GM12878 (cell line): ENCODE measurements at regions of chr9 and their contacts with region 1.

Region 1: GRCh38 chr9:107282753-107283625 is at the start of gene RAD23B:
- DNase-seq: peak; percentile 88
- ATAC-seq: peak; percentile 89
- H3K4me3 ChIP-seq: peak within 1 kb of the TSS; percentile 82
- H3K27ac ChIP-seq: peak within 1 kb of the TSS; percentile 92
- H3K4me1 ChIP-seq: peaks cover 8% of the 10 kb centered on the region; the same call in 1 of the 2 replicates
- H3K27me3 ChIP-seq: no peaks in the 10 kb centered on the region
- CTCF ChIP-seq: no peak
- EP300 ChIP-seq: no peak
- POLR2A ChIP-seq: peak; percentile 93
- RAD21 ChIP-seq: no peak
- polyA plus RNA-seq, gene RAD23B: 24.1 to 26.4 TPM

Region 2: DNA sequence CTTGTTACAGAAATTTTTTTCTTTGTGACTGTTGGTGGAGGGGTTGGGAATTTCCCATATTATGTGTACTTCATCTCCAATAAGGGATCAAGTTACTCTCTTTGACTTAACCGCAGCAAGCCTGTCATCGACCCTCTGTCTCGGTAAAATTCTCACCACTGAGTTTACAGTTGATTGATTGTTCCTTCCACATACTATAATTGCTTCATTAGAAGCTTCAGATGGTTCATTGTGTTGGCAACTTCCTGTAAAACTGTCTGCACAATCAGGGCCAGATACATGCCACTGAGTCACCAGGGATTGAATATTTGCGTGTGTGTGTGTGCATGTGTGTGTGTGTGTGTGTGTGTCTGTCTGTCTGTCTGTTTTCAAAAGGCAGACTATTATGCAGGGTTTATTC is 243.4 kb before region 1 on chr9:
- CTCF ChIA-PET with region 1: no interaction called
- POLR2A ChIA-PET with region 1: no interaction called
- RAD21 ChIA-PET with region 1: no interaction called
- SMC1A ChIA-PET with region 1: interaction called, 3 read pairs
- in situ Hi-C with region 1: no loop called
- intact Hi-C with region 1: loop called (anchors 10 kb)
- DNase-seq: peak; percentile 74
- ATAC-seq: peak; percentile 69
- H3K4me3 ChIP-seq: no peak overlapping the region
- H3K27ac ChIP-seq: no peak overlapping the region
- H3K4me1 ChIP-seq: no peaks in the 10 kb centered on the region
- H3K27me3 ChIP-seq: no peaks in the 10 kb centered on the region
- CTCF ChIP-seq: no peak
- EP300 ChIP-seq: peak in 1 of 2 experiments; percentile 62; a peak in 1 of 4 replicates
- POLR2A ChIP-seq: no peak
- RAD21 ChIP-seq: no peak

Region 3: GRCh38 chr9:107218829-107219485 is 64.0 kb before region 1 on chr9:
- CTCF ChIA-PET with region 1: no interaction called
- POLR2A ChIA-PET with region 1: interaction called, 11 read pairs
- RAD21 ChIA-PET with region 1: interaction called, 4 read pairs
- SMC1A ChIA-PET with region 1: interaction called, 7 read pairs
- in situ Hi-C with region 1: no loop called
- intact Hi-C with region 1: loop called (anchors 2 kb)
- DNase-seq: peak; percentile 53
- ATAC-seq: peak; percentile 85
- H3K4me3 ChIP-seq: no peak overlapping the region
- H3K27ac ChIP-seq: peak overlapping the region; percentile 31; the same call in 1 of the 2 replicates
- H3K4me1 ChIP-seq: peaks cover 14% of the 10 kb centered on the region; the same call in 1 of the 2 replicates
- H3K27me3 ChIP-seq: no peaks in the 10 kb centered on the region
- CTCF ChIP-seq: no peak
- EP300 ChIP-seq: peak; percentile 49 to 83; a peak in 3 of 4 replicates
- POLR2A ChIP-seq: no peak
- RAD21 ChIP-seq: no peak

Region 4: GRCh38 chr9:107269681-107270080 is 13.3 kb before region 1 on chr9:
- CTCF ChIA-PET with region 1: interaction called, 17 read pairs
- POLR2A ChIA-PET with region 1: interaction called, 20 read pairs
- RAD21 ChIA-PET with region 1: interaction called, 34 read pairs
- SMC1A ChIA-PET with region 1: interaction called, 64 read pairs
- in situ Hi-C with region 1: no loop called
- intact Hi-C with region 1: no loop called
- DNase-seq: no peak
- ATAC-seq: no peak
- H3K4me3 ChIP-seq: no peak overlapping the region
- H3K27ac ChIP-seq: no peak overlapping the region
- H3K4me1 ChIP-seq: no peaks in the 10 kb centered on the region; the same call in 1 of the 2 replicates
- H3K27me3 ChIP-seq: no peaks in the 10 kb centered on the region
- CTCF ChIP-seq: no peak
- EP300 ChIP-seq: no peak
- POLR2A ChIP-seq: no peak
- RAD21 ChIP-seq: no peak

Region 5: DNA sequence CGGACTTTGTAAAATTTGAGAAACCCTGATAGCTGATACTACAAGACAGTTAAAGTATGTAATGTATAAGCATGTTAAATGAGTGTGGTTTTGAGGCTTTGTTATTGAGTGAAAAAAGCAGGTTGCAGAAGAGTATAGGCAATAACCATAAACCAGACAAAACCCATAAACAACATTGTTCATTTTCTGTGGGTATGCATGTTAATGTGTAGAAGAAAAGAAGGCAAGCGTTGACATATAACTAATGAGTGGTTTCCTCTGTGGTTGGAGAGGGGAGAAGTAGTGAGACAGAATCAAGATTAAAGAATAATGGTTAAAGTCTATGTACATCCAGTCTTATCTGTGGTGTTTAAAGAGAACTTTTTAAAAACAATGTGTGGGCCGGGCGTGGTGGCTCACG is 26.3 kb after region 1 on chr9:
- CTCF ChIA-PET with region 1: interaction called, 4 read pairs
- POLR2A ChIA-PET with region 1: interaction called, 3 read pairs
- RAD21 ChIA-PET with region 1: interaction called, 6 read pairs
- SMC1A ChIA-PET with region 1: interaction called, 11 read pairs
- in situ Hi-C with region 1: no loop called
- intact Hi-C with region 1: no loop called
- DNase-seq: peak; percentile 25
- ATAC-seq: peak; percentile 77
- H3K4me3 ChIP-seq: no peak overlapping the region
- H3K27ac ChIP-seq: no peak overlapping the region
- H3K4me1 ChIP-seq: 0 out of 2 replicates have a peak, but pooled peaks cover 4% of the 10 kb centered on the region
- H3K27me3 ChIP-seq: no peaks in the 10 kb centered on the region
- CTCF ChIP-seq: no peak
- EP300 ChIP-seq: peak in 1 of 2 experiments; percentile 63; a peak in 1 of 4 replicates
- POLR2A ChIP-seq: no peak
- RAD21 ChIP-seq: no peak

Region 6: DNA sequence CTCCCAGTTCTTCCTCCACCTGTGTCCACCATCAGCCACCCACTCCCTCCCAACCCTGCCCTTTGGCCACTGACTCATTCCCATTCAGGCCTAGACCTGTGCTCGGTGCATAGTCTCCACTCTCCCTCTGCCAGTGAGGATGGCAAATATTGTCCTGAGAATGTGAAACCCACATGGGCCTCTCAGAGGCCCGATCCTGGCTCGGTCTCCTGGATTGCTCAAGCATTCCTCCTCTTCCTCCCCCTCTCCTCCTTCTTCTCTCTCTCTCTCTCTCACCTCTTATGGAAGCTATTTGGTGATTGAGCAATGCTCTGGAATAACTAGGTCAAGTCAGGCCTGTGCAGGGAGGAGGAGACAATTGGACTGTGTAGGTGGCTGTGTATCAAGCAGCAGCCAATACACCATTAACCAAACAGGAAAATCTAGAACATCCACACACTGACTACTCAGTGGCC is 106.7 kb after region 1 on chr9:
- CTCF ChIA-PET with region 1: no interaction called
- POLR2A ChIA-PET with region 1: no interaction called
- RAD21 ChIA-PET with region 1: no interaction called
- SMC1A ChIA-PET with region 1: no interaction called
- in situ Hi-C with region 1: no loop called
- intact Hi-C with region 1: no loop called
- DNase-seq: no peak
- ATAC-seq: no peak
- H3K4me3 ChIP-seq: no peak overlapping the region
- H3K27ac ChIP-seq: no peak overlapping the region
- H3K4me1 ChIP-seq: no peaks in the 10 kb centered on the region
- H3K27me3 ChIP-seq: peaks cover 0 to 6% of the 10 kb centered on the region in 2 experiments; a peak in 2 of 4 replicates
- CTCF ChIP-seq: no peak
- EP300 ChIP-seq: no peak
- POLR2A ChIP-seq: no peak
- RAD21 ChIP-seq: no peak

Region 7: GRCh38 chr9:107976765-107977164 is 693.8 kb after region 1 on chr9:
- CTCF ChIA-PET with region 1: no interaction called
- POLR2A ChIA-PET with region 1: no interaction called
- RAD21 ChIA-PET with region 1: no interaction called
- SMC1A ChIA-PET with region 1: no interaction called
- in situ Hi-C with region 1: no loop called
- intact Hi-C with region 1: no loop called
- DNase-seq: no peak
- ATAC-seq: no peak
- H3K4me3 ChIP-seq: no peak overlapping the region
- H3K27ac ChIP-seq: no peak overlapping the region
- H3K4me1 ChIP-seq: no peaks in the 10 kb centered on the region
- H3K27me3 ChIP-seq: no peaks in the 10 kb centered on the region; a peak in 1 of 4 replicates
- CTCF ChIP-seq: no peak
- EP300 ChIP-seq: no peak
- POLR2A ChIP-seq: no peak
- RAD21 ChIP-seq: no peak